ENCODE measurements at regions of chr7 and their contacts with region 1.

Region 1: GRCh38 chr7:48109848-48110663 is 21.0 kb downstream of the UPP1 start:
- DNase-seq: peak; percentile 85
- H3K4me3 ChIP-seq: no peak overlapping the region; a peak in 1 of 4 replicates
- H3K27ac ChIP-seq: no peak overlapping the region
- H3K4me1 ChIP-seq: peaks cover 0 to 4% of the 10 kb centered on the region in 2 experiments; a peak in 1 of 4 replicates
- H3K27me3 ChIP-seq: no peaks in the 10 kb centered on the region
- CTCF ChIP-seq: peak; percentile 100
- EP300 ChIP-seq: no peak
- RAD21 ChIP-seq: peak; percentile 95

Region 2: GRCh38 chr7:47945261-47946001 is 164.6 kb before region 1 on chr7:
- CTCF ChIA-PET with region 1: interaction called, 185 read pairs
- POLR2A ChIA-PET with region 1: no interaction called
- DNase-seq: peak; percentile 74
- H3K4me3 ChIP-seq: no peak overlapping the region
- H3K27ac ChIP-seq: no peak overlapping the region
- H3K4me1 ChIP-seq: peaks cover 24 to 35% of the 10 kb centered on the region in 2 experiments
- H3K27me3 ChIP-seq: no peaks in the 10 kb centered on the region
- CTCF ChIP-seq: peak; percentile 99
- EP300 ChIP-seq: no peak
- RAD21 ChIP-seq: peak; percentile 93

Region 3: GRCh38 chr7:47979145-47979831 is 130.8 kb before region 1 on chr7 and contains the start of gene HUS1:
- CTCF ChIA-PET with region 1: interaction called, 10 read pairs
- POLR2A ChIA-PET with region 1: no interaction called
- DNase-seq: peak; percentile 98
- H3K4me3 ChIP-seq: peak within 1 kb of the TSS; percentile 75 to 87
- H3K27ac ChIP-seq: peak within 1 kb of the TSS; percentile 76 to 83
- H3K4me1 ChIP-seq: peaks cover 8% of the 10 kb centered on the region in 2 experiments; a peak in 3 of 4 replicates
- H3K27me3 ChIP-seq: no peaks in the 10 kb centered on the region
- CTCF ChIP-seq: no peak
- EP300 ChIP-seq: peak in 1 of 2 experiments; percentile 54; a peak in 1 of 4 replicates
- RAD21 ChIP-seq: no peak
- polyA plus RNA-seq, gene HUS1: 17.8 and 22.9 TPM in 2 replicates

Region 4: DNA sequence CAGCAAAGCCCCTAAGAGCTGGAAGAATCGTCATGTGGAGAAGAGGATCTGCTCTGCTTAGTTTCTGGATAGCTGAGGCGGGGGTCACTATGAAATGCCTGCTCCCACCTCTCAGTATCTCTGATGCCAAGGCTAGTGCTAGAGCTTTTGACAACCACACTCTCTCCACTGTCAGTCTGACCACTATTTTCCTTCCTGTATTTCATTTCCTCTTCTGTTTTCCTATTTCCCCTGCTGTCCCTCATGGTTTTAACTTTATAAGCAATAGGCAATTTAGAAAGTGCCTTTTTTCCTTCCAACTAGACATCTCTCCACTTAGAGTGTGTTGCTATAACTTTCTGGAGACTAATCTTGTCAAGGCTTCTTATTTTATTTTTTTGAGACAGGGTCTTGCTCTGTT is 51.1 kb before region 1 on chr7:
- CTCF ChIA-PET with region 1: interaction called, 11 read pairs
- POLR2A ChIA-PET with region 1: no interaction called
- DNase-seq: no peak
- H3K4me3 ChIP-seq: no peak overlapping the region
- H3K27ac ChIP-seq: no peak overlapping the region
- H3K4me1 ChIP-seq: no peaks in the 10 kb centered on the region
- H3K27me3 ChIP-seq: no peaks in the 10 kb centered on the region
- CTCF ChIP-seq: no peak
- EP300 ChIP-seq: no peak
- RAD21 ChIP-seq: no peak

Region 5: GRCh38 chr7:48130658-48131108 is 20.6 kb after region 1 on chr7:
- CTCF ChIA-PET with region 1: interaction called, 21 read pairs
- POLR2A ChIA-PET with region 1: no interaction called
- DNase-seq: no peak
- H3K4me3 ChIP-seq: no peak overlapping the region
- H3K27ac ChIP-seq: no peak overlapping the region
- H3K4me1 ChIP-seq: no peaks in the 10 kb centered on the region
- H3K27me3 ChIP-seq: peaks cover 13% of the 10 kb centered on the region; the same call in 1 of the 2 replicates
- CTCF ChIP-seq: no peak
- EP300 ChIP-seq: no peak
- RAD21 ChIP-seq: no peak